Activated T-helper 1 cell treated with anti-CD3 and anti-CD28 coated beads, Interleukin-12 subunit alpha, Interleukin-12 subunit beta, Interleukin-2, Interleukin-4 antibody, amounts not matched to agents 30 ng/mL and 10 ng/mL and 1 ng/mL, durations not matched to agents 14 hours and 24 hours and 36 hours (primary cell): ENCODE measurements at regions of chr1 and their contacts with region 1.

Region 1: DNA sequence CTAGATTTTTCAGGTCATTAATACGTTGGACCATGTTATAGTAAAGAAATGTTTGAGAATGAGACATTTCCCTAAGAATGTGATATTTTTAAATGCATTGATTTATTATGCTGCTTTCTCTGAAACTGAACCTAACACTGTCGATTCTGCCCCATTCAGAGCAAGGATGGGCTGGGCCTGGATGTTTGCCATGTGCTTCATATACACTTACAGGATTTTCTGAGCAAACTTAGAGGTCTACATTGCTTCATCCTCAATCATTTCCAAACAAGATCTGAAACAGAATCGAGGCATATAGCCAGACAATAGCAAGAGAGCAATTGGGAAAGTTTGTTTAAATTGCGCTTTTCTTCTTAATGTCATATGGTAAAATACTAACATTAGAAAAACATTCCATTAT is 183.4 kb downstream of the CRB1 start:
- DNase-seq: no peak
- H3K4me3 Mint-ChIP-seq: no peak overlapping the region
- H3K27ac Mint-ChIP-seq: no peak overlapping the region
- H3K4me1 Mint-ChIP-seq: no peaks in the 10 kb centered on the region
- H3K27me3 Mint-ChIP-seq: no peaks in the 10 kb centered on the region

Region 2: GRCh38 chr1:196438329-196438728 is 1013.1 kb before region 1 on chr1:
- intact Hi-C with region 1: loop called (anchors 5 kb)
- DNase-seq: no peak
- H3K4me3 Mint-ChIP-seq: no peak overlapping the region
- H3K27ac Mint-ChIP-seq: no peak overlapping the region
- H3K4me1 Mint-ChIP-seq: no peaks in the 10 kb centered on the region
- H3K27me3 Mint-ChIP-seq: no peaks in the 10 kb centered on the region